BJ (cell line): ENCODE measurements at regions of chr2 and their contacts with region 1.

Region 1: DNA sequence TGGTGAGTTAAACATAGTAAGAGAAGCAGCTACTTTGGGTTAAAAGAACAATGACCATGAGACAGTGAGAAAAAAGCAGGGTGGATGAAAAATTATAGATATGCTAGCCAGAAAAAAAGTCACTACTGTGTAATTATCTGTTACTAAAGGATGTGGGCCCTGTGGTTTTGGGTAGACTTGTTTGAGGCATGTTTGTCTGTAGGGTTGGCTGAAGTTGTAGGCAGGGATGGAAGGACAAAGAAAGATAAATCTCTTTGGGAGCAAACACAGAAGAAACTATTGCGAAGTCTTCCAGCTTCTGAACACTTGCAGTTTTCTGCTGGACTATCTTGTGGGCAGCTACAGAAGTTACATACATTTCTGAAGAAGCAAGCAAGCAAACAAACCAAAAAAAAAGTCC is 28.2 kb downstream of the RND3 start:
- DNase-seq: no peak
- H3K4me3 ChIP-seq: no peak overlapping the region
- H3K27me3 ChIP-seq: no peaks in the 10 kb centered on the region
- CTCF ChIP-seq: no peak

Region 2: GRCh38 chr2:149767516-149767974 is 691.7 kb before region 1 on chr2:
- CTCF ChIA-PET with region 1: no interaction called
- POLR2A ChIA-PET with region 1: interaction called, 10 read pairs
- DNase-seq: peak; percentile 78
- H3K4me3 ChIP-seq: no peak overlapping the region
- H3K27me3 ChIP-seq: no peaks in the 10 kb centered on the region
- CTCF ChIP-seq: no peak

Region 3: DNA sequence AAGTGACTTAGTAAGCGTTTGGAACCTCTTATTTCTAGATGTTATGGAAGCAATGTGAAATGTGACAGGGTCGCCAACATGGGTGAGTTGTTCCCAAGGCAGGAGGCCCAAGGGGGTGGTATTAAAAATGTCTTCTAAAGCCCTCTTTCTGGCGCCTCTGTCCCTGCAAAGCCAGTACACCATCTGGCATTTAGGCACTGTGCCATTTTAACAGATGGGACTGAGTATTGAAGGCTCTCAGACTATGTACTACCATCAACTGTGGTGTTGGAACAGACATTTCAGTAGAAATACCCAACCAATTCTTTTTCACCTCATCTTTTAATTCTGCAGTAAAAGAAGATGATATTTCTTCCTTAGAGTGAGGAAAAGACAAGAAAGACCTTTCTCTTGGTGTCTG is 487.2 kb before region 1 on chr2:
- CTCF ChIA-PET with region 1: no interaction called
- POLR2A ChIA-PET with region 1: no interaction called
- DNase-seq: no peak
- H3K4me3 ChIP-seq: no peak overlapping the region
- H3K27me3 ChIP-seq: no peaks in the 10 kb centered on the region
- CTCF ChIP-seq: no peak

Region 4: DNA sequence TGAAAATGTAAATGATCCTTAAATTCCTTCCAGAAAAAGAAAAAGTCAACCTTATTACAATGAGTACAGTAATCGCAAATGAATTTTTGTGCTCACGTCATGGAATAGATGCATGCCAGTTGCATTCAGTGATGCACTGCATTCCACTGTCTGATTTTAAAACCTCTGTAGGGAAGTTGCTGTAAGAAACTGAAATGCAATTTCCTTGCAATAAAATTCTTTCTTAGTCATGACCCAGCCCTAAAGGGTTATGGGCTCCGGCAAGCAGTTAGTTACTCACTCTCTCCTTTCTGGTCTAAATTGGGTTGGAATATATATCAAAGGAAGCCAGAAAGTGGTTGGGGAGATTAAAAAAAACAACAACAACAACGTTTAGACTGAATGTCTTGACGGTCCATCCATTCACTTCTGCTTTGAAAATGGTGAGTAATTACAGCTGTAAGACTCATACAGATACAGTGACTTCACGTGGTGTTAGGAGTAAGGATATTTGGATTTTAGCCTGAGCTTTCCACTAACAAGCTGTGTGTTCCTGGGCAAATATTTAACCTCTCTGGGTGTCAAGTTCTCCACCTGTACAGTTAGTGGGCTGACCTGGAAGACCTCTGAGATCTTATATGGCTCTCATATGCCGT is 36.8 kb after region 1 on chr2:
- CTCF ChIA-PET with region 1: no interaction called
- POLR2A ChIA-PET with region 1: no interaction called
- DNase-seq: peak; percentile 99
- H3K4me3 ChIP-seq: no peak overlapping the region
- H3K27me3 ChIP-seq: no peaks in the 10 kb centered on the region
- CTCF ChIP-seq: no peak